Common myeloid progenitor, CD34-positive (primary cell): ENCODE measurements at regions of chr3 and their contacts with region 1.

Region 1: GRCh38 chr3:155766206-155766605 is 21.3 kb upstream of the PLCH1 start:
- DNase-seq: no peak
- H3K4me3 ChIP-seq: no peak overlapping the region
- H3K27ac ChIP-seq: no peak overlapping the region
- H3K4me1 ChIP-seq: peaks cover 0 to 2% (median 0%) of the 10 kb centered on the region in 4 experiments
- H3K27me3 ChIP-seq: no peaks in the 10 kb centered on the region

Region 2: DNA sequence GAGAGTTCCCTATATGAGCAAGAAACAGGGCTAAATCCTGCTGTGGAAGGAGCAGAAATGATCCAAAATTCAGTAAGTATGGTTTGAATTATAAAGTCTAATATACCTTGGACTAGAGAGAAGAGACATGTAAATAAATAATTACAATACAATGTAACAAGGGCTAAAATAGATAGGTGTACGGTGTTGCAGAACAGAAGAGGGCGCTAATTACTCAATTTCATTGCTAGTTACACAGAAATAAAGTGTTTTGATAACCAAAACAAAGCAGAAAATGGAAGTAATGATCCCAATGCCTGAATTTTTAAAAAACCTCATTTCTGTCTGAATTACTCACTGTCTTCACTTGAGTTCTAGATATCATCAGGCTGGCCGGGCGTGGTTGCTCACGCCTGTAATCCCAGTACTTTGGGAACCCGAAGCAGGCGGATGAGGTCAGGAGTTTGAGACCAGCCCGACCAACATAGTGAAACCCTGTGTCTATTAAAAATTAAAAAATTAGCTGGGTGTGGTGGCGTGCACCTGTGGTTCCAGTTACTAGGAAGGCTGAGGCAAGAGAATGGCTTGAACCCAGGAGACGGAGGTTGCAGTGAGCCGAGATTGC is 13.1 kb before region 1 on chr3:
- CTCF ChIA-PET with region 1: interaction called, 10 read pairs
- POLR2A ChIA-PET with region 1: no interaction called
- DNase-seq: peak; percentile 39 to 73 (median 69)
- H3K4me3 ChIP-seq: no peak overlapping the region
- H3K27ac ChIP-seq: no peak overlapping the region
- H3K4me1 ChIP-seq: no peaks in the 10 kb centered on the region
- H3K27me3 ChIP-seq: no peaks in the 10 kb centered on the region

Region 3: GRCh38 chr3:156005736-156006135 is 239.5 kb after region 1 on chr3:
- CTCF ChIA-PET with region 1: no interaction called
- POLR2A ChIA-PET with region 1: no interaction called
- DNase-seq: no peak
- H3K4me3 ChIP-seq: no peak overlapping the region
- H3K27ac ChIP-seq: no peak overlapping the region
- H3K4me1 ChIP-seq: no peaks in the 10 kb centered on the region
- H3K27me3 ChIP-seq: no peaks in the 10 kb centered on the region